Activated T-helper 1 cell treated with anti-CD3 and anti-CD28 coated beads, Interleukin-12 subunit alpha, Interleukin-12 subunit beta, Interleukin-2, Interleukin-4 antibody, amounts not matched to agents 30 ng/mL and 10 ng/mL and 1 ng/mL, durations not matched to agents 14 hours and 24 hours and 36 hours (primary cell): ENCODE measurements at regions of chr1 and their contacts with region 1.

Region 1: DNA sequence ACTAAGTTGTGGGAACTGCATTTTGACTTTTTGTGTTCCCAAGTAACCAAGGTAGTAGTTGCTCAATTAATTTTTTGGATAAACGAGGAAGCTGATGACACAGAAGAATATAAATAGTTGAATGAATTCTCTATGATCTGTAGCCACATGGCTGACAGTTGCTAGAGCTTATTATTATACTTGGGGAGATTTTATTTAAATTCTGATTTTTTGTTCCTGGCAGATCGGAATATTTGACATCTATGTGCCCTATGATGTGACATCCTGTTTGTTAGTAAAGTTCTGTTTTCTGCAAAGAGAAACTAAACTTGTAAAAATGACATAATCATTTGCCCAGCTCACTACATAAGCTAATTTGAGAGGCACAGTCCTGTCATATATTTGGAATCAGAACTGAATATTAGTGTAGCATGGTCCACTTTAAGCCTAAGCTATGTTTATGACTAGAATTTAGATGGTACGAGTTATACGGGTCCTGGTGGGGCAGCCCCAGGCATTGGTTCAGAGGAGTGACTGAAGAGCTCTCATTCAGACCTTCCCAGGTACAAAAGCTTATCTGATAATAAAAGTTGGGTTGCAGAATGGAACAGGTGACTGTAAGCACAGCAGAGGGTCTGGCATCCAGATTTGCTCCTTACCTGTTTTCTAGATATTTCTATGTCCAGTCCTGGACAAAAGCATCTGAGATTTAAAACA is 9.8 kb upstream of the LYST start:
- DNase-seq: no peak
- H3K4me3 Mint-ChIP-seq: peak overlapping the region; percentile 69
- H3K27ac Mint-ChIP-seq: peak overlapping the region; percentile 98
- H3K4me1 Mint-ChIP-seq: peaks cover 88% of the 10 kb centered on the region
- H3K27me3 Mint-ChIP-seq: no peaks in the 10 kb centered on the region

Region 2: GRCh38 chr1:235917267-235917811 is 40.8 kb after region 1 on chr1:
- intact Hi-C with region 1: loop called (anchors 1 kb)
- DNase-seq: peak; percentile 29
- H3K4me3 Mint-ChIP-seq: no peak overlapping the region
- H3K27ac Mint-ChIP-seq: peak overlapping the region; percentile 90
- H3K4me1 Mint-ChIP-seq: peaks cover 29% of the 10 kb centered on the region
- H3K27me3 Mint-ChIP-seq: no peaks in the 10 kb centered on the region